ENCODE measurements at regions of chr17 and their contacts with region 1.

Region 1: DNA sequence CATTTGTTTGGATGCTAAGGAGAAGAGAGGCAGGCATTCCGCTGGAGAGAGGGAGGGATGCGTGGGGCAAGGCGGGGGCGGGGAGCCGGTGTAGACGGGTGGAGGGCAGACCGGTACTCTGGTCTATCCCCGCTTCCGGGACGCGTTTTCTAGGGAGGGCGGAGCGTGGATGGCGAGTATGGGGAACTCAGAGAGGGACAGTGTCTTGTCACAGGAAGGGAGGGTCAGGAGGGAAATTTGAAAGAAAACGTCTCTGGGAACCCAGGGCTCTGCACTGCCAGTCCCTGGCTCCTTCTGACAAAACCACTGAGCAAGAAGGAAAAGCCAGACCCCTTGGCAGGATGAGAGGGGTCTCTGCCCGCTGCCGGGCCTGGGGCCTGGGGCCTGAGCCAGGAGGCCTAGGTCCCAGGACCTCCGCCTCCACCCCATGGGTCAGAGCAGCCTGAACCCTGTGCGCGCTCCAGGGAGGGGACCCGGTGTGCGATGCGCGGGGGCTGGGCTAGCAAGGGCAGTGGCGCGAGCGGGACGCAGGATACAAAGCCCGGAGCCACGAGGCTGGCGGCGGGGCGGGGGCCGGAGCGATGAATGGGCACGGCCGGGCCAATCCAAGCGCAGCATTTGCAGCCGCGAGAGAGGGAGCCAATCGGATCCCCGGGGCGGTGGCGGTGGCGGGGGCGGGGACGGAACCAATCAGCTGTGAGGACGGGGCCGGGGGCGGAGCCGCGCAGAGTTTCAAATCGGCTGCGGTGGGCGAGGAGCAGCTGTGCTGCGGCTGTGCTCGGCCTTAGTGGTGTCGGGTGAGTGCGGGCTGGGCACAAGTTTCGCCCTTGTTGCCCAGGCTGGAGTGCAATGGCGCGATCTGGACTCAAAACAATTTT is at the start of gene PIMREG:
- DNase-seq: peak; percentile 78 to 91 (median 86)
- ATAC-seq: peak; percentile 94 to 97 (median 96)
- H3K4me3 ChIP-seq: peak within 1 kb of the TSS; percentile 67 to 88
- H3K4me3 Mint-ChIP-seq: peak within 1 kb of the TSS; percentile 76 to 87 (median 83)
- H3K27ac ChIP-seq: no peak within 1 kb of the TSS
- H3K27ac Mint-ChIP-seq: peak within 1 kb of the TSS; percentile 84 to 85
- H3K4me1 ChIP-seq: peaks cover 3 to 16% of the 10 kb centered on the region in 2 experiments
- H3K4me1 Mint-ChIP-seq: peaks cover 7 to 13% (median 11%) of the 10 kb centered on the region in 3 donors
- H3K27me3 ChIP-seq: peaks cover 0 to 8% of the 10 kb centered on the region in 2 experiments
- H3K27me3 Mint-ChIP-seq: peaks cover 13 to 14% of the 10 kb centered on the region in 2 donors
- total RNA-seq, gene PIMREG: 0.23 to 0.79 (median 0.43) TPM in 3 of 5 donors, not detected in the others

Region 2: DNA sequence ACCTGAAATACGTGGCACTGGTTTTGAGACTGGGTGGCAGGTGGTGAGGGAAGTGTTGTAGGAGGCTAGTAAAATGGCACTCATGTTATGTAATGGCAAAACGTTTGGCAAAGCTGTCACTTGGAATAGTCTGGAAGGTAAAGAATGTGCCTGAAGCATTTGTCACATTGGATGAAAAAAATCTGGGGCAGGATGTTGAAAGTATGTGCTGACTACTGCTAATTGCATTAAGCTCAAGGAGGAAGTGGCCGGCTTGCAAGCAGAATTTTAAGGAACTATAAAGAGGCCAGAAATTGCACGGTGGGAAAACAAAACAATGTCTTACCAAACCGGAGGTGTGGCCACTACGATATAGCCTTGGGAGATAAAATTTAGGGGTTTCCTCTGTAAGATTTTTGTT is 833.0 kb before region 1 on chr17:
- CTCF ChIA-PET with region 1: interaction called in 1 of 2 experiments, 14 read pairs
- POLR2A ChIA-PET with region 1: no interaction called
- DNase-seq: peak in 1 of 35 experiments; percentile 13
- ATAC-seq: no peak
- H3K4me3 ChIP-seq: no peak overlapping the region
- H3K4me3 Mint-ChIP-seq: no peak overlapping the region
- H3K27ac ChIP-seq: no peak overlapping the region
- H3K27ac Mint-ChIP-seq: no peak overlapping the region
- H3K4me1 ChIP-seq: no peaks in the 10 kb centered on the region
- H3K4me1 Mint-ChIP-seq: no peaks in the 10 kb centered on the region
- H3K27me3 ChIP-seq: peaks cover 0 to 13% of the 10 kb centered on the region in 2 experiments
- H3K27me3 Mint-ChIP-seq: peaks cover 11 to 20% of the 10 kb centered on the region in 2 donors